ENCODE measurements at regions of chr10 and their contacts with region 1.

Region 1: GRCh38 chr10:62050893-62051433 is 149.5 kb downstream of the ARID5B start:
- DNase-seq: peak; percentile 77
- H3K4me3 Mint-ChIP-seq: peak overlapping the region; percentile 96
- H3K27ac Mint-ChIP-seq: peak overlapping the region; percentile 99
- H3K4me1 Mint-ChIP-seq: peaks cover 86% of the 10 kb centered on the region
- H3K27me3 Mint-ChIP-seq: no peaks in the 10 kb centered on the region

Region 2: DNA sequence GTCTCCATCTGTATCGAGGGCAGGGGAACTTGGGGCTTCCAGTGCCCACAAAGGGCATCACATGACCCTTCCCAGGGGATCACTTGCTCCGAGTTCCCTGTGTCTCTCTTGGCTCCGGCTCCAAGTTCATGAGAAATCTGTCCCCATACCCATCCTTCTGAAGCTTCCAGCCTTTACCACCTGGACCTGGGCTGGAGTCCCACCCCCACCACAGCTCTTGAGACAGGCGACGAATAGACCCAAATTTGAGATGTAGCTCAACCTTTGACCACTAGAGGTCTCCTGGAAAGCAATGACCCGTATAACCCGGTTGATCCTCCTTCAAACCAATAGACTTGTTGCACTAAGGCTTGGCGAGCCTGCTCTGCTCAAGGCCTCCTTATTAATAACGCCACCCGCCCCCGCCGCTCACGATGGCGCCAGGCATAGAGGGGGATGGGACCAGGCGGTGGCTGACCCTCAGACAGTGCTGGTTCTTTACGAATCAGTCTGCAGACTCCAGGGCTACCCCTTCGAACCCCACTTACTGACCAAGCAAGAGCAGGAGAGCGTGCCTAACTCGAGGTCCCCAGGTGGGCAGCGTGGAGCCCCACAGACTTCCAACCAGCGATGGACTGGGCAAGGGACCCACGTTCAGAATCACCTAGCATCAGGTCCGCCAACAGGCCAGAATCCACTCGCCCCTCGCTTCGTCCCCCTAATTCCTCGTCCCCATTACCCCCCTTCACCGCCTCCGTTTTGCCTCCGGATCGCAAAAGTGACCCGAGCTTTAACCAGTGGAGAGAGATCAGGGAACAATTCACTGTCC is 153.9 kb before region 1 on chr10:
- intact Hi-C with region 1: loop called (anchors 1 kb)
- DNase-seq: peak; percentile 56
- H3K4me3 Mint-ChIP-seq: peak overlapping the region; percentile 87
- H3K27ac Mint-ChIP-seq: peak overlapping the region; percentile 90
- H3K4me1 Mint-ChIP-seq: peaks cover 38% of the 10 kb centered on the region
- H3K27me3 Mint-ChIP-seq: peaks cover 3% of the 10 kb centered on the region

Region 3: GRCh38 chr10:61987951-61988379 is 63.0 kb before region 1 on chr10:
- intact Hi-C with region 1: loop called (anchors 1 kb)
- DNase-seq: peak; percentile 33
- H3K4me3 Mint-ChIP-seq: peak overlapping the region; percentile 78
- H3K27ac Mint-ChIP-seq: peak overlapping the region; percentile 99
- H3K4me1 Mint-ChIP-seq: peaks cover 87% of the 10 kb centered on the region
- H3K27me3 Mint-ChIP-seq: no peaks in the 10 kb centered on the region

Region 4: DNA sequence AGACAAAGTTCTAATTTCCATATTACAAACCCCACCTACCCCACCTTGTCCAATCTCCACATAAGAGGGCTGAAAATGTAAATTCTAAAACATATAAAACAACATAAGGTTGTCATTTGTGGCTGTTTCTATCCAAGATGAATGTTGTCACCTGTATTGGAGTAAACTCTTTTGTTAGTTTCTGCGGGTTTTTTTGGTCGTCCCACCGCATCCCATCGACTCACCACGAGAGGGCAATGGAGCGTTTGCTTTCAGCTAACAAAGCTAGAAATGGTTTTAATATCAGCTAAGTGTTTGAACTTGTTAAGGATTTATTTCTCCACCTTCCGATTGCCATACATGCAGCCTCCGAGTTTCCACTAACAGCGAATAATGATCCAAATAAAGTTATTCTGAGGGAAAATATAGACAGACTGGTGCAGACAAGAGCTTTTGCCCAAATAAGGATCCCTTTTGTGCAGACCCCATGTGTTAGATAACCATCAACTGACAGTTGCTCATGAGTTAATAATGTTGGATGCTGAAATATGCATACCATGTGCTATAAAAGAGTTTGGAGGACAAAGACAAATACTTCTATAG is 12.3 kb before region 1 on chr10:
- intact Hi-C with region 1: loop called (anchors 1 kb)
- DNase-seq: peak; percentile 72
- H3K4me3 Mint-ChIP-seq: peak overlapping the region; percentile 73
- H3K27ac Mint-ChIP-seq: peak overlapping the region; percentile 89
- H3K4me1 Mint-ChIP-seq: peaks cover 95% of the 10 kb centered on the region
- H3K27me3 Mint-ChIP-seq: no peaks in the 10 kb centered on the region

Region 5: GRCh38 chr10:62183442-62183841 is 132.5 kb after region 1 on chr10:
- intact Hi-C with region 1: loop called (anchors 1 kb)
- DNase-seq: peak; percentile 61
- H3K4me3 Mint-ChIP-seq: peak overlapping the region; percentile 5
- H3K27ac Mint-ChIP-seq: peak overlapping the region; percentile 92
- H3K4me1 Mint-ChIP-seq: peaks cover 88% of the 10 kb centered on the region
- H3K27me3 Mint-ChIP-seq: no peaks in the 10 kb centered on the region

Region 6: DNA sequence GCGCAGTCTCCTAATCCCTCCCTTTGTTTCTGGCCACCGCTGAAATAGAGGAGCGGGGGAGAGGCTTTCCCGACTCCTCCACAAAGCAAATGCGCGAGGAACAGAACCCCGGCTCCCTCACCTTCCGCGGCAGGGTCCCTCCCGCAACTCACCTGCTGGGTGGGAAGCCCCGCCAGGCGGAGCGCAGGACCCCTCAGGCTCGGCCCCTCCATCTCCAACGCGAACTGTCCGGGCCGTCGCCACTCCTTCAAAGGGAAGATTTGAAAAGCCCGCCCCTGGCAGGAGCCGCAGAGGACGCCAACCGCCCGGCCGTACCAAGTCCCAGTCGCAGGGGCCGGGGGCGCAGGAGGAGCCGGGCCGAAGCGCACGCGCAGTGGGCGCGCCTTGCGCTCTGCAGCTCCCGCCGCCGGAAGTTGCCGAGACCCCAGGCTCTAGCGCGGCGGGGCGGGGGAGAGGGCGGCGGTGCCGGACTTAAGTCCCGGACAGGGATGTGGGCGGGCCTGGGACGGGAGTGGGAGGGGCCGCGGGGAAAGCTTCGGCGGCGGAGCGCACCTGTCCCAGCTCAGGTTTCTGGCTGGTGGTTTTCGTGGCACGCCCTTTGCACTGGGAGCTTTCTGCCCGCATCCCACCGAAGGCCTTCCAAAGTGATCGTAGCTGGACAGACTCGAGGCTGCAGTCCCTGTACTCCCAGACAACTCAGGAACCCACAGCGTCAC is 217.6 kb after region 1 on chr10 and contains the start of gene RTKN2:
- intact Hi-C with region 1: no loop called
- DNase-seq: peak; percentile 75
- H3K4me3 Mint-ChIP-seq: peak within 1 kb of the TSS; percentile 83
- H3K27ac Mint-ChIP-seq: no peak within 1 kb of the TSS
- H3K4me1 Mint-ChIP-seq: peaks cover 32% of the 10 kb centered on the region
- H3K27me3 Mint-ChIP-seq: peaks cover 27% of the 10 kb centered on the region
- total RNA-seq, gene RTKN2: 3.0 and 3.7 TPM in 2 replicates

Region 7: DNA sequence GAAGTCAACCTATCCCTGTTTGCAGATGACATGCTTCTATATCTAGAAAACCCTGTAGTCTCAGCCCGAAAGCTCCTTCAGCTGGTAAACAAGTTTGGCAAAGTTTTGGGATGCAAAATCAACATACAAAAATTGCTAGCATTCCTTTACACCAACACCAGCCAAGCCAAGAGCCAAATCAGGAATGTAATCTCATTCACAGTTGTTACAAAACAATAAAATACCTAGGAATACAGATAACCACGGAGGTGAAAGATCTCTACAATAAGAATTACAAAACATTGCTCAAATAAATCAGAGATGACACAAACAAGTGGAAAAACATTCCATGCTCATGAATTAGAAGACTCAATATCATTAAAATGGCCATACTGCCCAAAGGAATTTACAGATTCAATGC is 272.8 kb after region 1 on chr10:
- intact Hi-C with region 1: no loop called
- DNase-seq: no peak
- H3K4me3 Mint-ChIP-seq: no peak overlapping the region
- H3K27ac Mint-ChIP-seq: no peak overlapping the region
- H3K4me1 Mint-ChIP-seq: no peaks in the 10 kb centered on the region
- H3K27me3 Mint-ChIP-seq: peaks cover 16% of the 10 kb centered on the region

Region 8: DNA sequence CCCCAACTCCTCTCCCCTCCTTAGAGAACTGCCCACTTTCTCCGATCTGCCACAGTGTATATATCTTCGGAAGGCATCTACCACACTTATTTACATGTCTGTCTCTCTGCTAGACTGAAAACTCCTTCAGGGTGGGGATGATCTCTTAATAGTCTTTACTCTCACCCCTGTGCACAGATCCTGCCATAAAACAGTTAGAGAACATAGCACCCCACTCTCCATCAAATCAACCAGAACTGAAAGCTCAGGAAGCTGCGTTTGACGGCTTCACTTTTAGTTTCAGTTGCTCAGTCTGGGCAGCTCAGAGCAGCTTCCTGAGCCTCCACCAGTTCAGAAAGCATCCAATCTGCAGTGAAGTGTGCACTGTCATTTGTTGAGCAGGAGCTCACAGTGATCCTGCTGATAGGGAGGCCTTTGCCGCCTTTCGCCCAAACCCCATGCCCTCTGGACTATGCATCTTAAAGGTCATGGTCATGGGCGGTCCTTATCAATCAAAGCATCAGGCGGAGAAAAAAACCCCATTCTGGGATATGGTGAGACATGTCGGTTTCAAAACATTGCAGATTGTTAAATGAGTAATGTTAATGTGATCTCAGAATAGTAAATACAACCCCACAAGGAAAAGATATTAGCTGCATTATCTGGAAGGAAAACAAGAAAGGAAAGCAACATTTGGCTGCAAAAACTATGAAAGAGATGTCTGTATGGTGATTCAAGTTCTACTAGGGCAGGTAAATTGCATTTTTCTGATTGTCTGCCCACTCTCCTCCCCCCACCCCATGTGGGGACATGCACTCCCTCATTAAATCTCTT is 586.5 kb after region 1 on chr10:
- intact Hi-C with region 1: loop called (anchors 10 kb)
- DNase-seq: peak; percentile 73
- H3K4me3 Mint-ChIP-seq: no peak overlapping the region
- H3K27ac Mint-ChIP-seq: no peak overlapping the region
- H3K4me1 Mint-ChIP-seq: peaks cover 28% of the 10 kb centered on the region
- H3K27me3 Mint-ChIP-seq: no peaks in the 10 kb centered on the region

Region 9: GRCh38 chr10:63707254-63707910 is 1656.4 kb after region 1 on chr10:
- intact Hi-C with region 1: loop called (anchors 2 kb)
- DNase-seq: peak; percentile 19
- H3K4me3 Mint-ChIP-seq: peak overlapping the region; percentile 3
- H3K27ac Mint-ChIP-seq: peak overlapping the region; percentile 61
- H3K4me1 Mint-ChIP-seq: peaks cover 22% of the 10 kb centered on the region
- H3K27me3 Mint-ChIP-seq: no peaks in the 10 kb centered on the region

Measured in activated T-helper 1 cell treated with anti-CD3 and anti-CD28 coated beads, Interleukin-12 subunit alpha, Interleukin-12 subunit beta, Interleukin-2, Interleukin-4 antibody, amounts not matched to agents 30 ng/mL and 10 ng/mL and 1 ng/mL, durations not matched to agents 14 hours and 24 hours and 36 hours (primary cell).